ENCODE measurements at regions of chr2 and their contacts with region 1.

Region 1: DNA sequence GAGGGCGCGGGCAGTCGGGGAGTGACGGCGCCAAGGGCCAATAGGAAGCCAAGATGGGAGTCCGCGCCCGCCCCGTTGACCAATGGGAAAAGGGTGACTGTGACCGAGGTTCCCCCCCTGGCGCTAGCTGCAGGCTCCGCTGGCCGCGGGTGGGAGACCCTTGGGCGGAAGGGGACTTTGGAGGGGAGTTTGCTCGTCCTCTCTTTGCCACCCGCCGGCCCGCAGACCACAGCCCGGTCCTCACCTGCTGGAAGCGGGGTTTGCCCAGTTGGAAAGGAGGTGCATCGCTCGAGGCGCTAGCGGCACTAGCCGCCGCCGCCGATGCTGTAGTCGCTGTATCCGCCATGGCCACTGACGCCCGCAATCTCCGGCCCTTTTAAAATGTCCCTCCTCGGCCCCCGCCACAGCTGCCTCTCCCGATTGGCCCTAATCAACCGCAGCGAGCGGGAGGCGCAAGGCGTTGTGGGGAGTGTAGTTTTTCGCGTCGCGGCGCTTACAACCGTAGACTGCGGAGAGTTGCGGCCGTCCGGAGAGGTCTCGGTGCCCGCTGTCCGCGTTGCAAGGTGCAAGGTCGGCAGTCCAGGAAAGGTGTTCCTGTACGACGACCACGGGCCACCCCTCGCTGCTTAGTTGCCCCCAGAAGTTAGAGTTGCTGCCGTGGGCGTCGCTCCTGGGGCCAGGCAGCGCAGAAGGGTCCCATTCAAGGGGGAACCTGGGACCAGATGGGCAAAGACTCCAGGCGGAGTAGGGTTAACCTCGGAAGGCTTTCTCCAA is at the start of gene SFXN5:
- DNase-seq: peak; percentile 97 to 99
- H3K4me3 ChIP-seq: peak within 1 kb of the TSS; percentile 94
- H3K4me3 Mint-ChIP-seq: peak within 1 kb of the TSS; percentile 78
- H3K27ac Mint-ChIP-seq: peak within 1 kb of the TSS; percentile 91
- H3K4me1 ChIP-seq: 0 out of 2 replicates have a peak, but pooled peaks cover 6% of the 10 kb centered on the region
- H3K4me1 Mint-ChIP-seq: peaks cover 18% of the 10 kb centered on the region
- H3K27me3 ChIP-seq: no peaks in the 10 kb centered on the region
- H3K27me3 Mint-ChIP-seq: no peaks in the 10 kb centered on the region
- CTCF ChIP-seq: peak in 1 of 2 experiments; percentile 38
- total RNA-seq, gene SFXN5: 26.8 and 31.3 TPM in 2 replicates

Region 2: GRCh38 chr2:72993147-72993932 is 78.2 kb before region 1 on chr2:
- CTCF ChIA-PET with region 1: no interaction called
- POLR2A ChIA-PET with region 1: no interaction called
- intact Hi-C with region 1: loop called (anchors 1 kb)
- DNase-seq: peak in 1 of 2 experiments; percentile 70
- H3K4me3 ChIP-seq: no peak overlapping the region
- H3K4me3 Mint-ChIP-seq: no peak overlapping the region
- H3K27ac Mint-ChIP-seq: no peak overlapping the region
- H3K4me1 ChIP-seq: no peaks in the 10 kb centered on the region
- H3K4me1 Mint-ChIP-seq: no peaks in the 10 kb centered on the region
- H3K27me3 ChIP-seq: no peaks in the 10 kb centered on the region
- H3K27me3 Mint-ChIP-seq: no peaks in the 10 kb centered on the region
- CTCF ChIP-seq: peak; percentile 78 to 98

Region 3: GRCh38 chr2:73293534-73294171 is 222.1 kb after region 1 on chr2 and contains the start of gene EGR4:
- CTCF ChIA-PET with region 1: no interaction called
- POLR2A ChIA-PET with region 1: no interaction called
- intact Hi-C with region 1: no loop called
- DNase-seq: peak; percentile 89 to 91
- H3K4me3 ChIP-seq: peak within 1 kb of the TSS; percentile 45
- H3K4me3 Mint-ChIP-seq: peak within 1 kb of the TSS; percentile 71
- H3K27ac Mint-ChIP-seq: peak within 1 kb of the TSS; percentile 18
- H3K4me1 ChIP-seq: no peaks in the 10 kb centered on the region
- H3K4me1 Mint-ChIP-seq: no peaks in the 10 kb centered on the region
- H3K27me3 ChIP-seq: peaks cover 1% of the 10 kb centered on the region; the same call in 1 of the 2 replicates
- H3K27me3 Mint-ChIP-seq: peaks cover 23% of the 10 kb centered on the region
- CTCF ChIP-seq: no peak
- total RNA-seq, gene EGR4: 0.30 TPM in 1 of 2 replicates, not detected in the other